ENCODE measurements at regions of chr1 and their contacts with region 1.

Region 1: DNA sequence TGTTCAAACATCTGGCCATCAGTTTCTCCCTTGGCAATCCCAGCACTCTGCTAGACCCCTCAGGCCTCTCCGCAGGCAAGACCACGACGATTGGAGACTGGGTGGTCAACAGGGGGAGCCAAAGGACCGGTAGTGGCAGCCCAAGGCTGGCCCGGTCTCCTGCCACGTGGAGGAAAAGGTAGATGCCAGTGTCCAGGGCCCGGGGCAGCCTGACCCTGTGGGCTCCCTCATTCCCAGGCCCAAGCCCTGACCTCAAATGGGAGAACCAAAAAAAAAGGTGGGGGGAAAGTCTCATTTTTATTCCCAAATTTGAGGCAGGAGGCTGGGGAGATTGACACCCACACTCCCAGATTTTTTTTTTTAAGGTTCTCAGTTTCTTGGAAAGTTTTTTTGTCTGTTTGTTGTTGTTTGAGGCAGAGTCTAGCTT is 24.8 kb downstream of the S100A6 start:
- DNase-seq: peak; percentile 90
- ATAC-seq: peak; percentile 95
- H3K4me3 Mint-ChIP-seq: no peak overlapping the region
- H3K27ac Mint-ChIP-seq: peak overlapping the region; percentile 74
- H3K4me1 Mint-ChIP-seq: peaks cover 10% of the 10 kb centered on the region
- H3K27me3 Mint-ChIP-seq: no peaks in the 10 kb centered on the region

Region 2: GRCh38 chr1:153525088-153525728 is 14.2 kb after region 1 on chr1:
- CTCF ChIA-PET with region 1: interaction called, 16 read pairs
- POLR2A ChIA-PET with region 1: no interaction called
- intact Hi-C with region 1: no loop called
- DNase-seq: no peak
- ATAC-seq: no peak
- H3K4me3 Mint-ChIP-seq: no peak overlapping the region
- H3K27ac Mint-ChIP-seq: no peak overlapping the region
- H3K4me1 Mint-ChIP-seq: peaks cover 2% of the 10 kb centered on the region
- H3K27me3 Mint-ChIP-seq: no peaks in the 10 kb centered on the region

Region 3: DNA sequence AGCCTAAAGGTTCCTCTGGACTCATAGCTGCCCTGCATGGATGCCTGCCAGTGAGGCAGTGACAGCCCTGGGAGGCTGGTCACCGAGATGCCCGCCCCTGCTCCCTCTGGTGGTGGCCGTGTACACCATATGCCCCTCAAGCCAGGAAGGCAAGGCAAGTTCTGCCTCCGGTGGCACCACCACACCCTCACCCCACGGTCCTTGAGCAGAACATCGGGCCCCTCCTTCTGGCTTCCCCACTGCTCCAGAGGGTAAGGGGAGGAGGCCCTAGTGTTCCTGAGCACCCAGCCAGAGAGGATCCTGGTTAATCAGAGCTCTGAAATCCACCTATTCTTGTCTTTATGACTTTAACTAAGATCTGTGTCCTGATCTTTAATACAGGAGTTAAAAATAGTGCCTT is 106.7 kb after region 1 on chr1:
- CTCF ChIA-PET with region 1: interaction called, 57 read pairs
- POLR2A ChIA-PET with region 1: interaction called, 3 read pairs
- intact Hi-C with region 1: loop called (anchors 1 kb)
- DNase-seq: peak; percentile 90
- ATAC-seq: peak; percentile 99
- H3K4me3 Mint-ChIP-seq: no peak overlapping the region
- H3K27ac Mint-ChIP-seq: peak overlapping the region; percentile 58
- H3K4me1 Mint-ChIP-seq: peaks cover 20% of the 10 kb centered on the region
- H3K27me3 Mint-ChIP-seq: no peaks in the 10 kb centered on the region

Region 4: DNA sequence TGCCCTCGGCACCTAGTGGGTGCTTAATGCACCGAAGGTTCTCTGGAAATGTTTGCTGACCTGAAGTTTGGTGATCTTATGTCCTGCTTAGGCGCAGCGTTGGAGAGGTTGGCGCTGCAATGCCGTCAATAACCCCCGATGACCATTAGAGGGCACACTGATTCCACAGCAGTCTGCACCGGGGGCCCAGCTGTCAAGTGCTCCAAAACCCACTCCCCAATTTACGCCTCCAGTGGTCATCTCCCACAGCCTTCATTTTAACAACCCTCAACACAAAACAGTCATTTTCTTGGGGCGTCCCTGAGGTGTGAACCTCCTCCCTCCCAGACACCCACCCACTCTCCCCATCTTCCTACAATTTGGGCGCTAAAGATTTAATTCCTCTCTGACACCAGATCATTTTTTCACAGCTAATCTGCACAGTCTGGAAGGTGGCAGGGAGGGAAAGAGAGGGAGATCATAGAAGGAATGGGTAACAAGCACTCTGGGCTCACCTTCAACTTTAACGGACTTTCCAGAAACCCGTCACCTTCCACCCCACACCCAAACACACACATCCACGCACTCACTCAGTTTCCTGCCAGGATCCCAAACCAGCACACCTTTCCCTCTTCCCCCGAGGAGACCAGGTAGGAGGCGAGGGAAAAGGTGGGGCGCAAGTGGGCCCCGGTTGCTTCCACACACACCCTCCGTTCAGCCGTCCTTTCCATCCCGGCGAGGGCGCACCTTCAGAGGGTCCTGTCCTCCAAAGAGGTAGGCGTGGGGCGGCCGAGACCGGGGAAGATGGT is 166.9 kb after region 1 on chr1:
- CTCF ChIA-PET with region 1: interaction called, 4 read pairs
- POLR2A ChIA-PET with region 1: no interaction called
- intact Hi-C with region 1: loop called (anchors 2 to 5 kb)
- DNase-seq: peak; percentile 74
- ATAC-seq: peak; percentile 66
- H3K4me3 Mint-ChIP-seq: peak overlapping the region; percentile 64
- H3K27ac Mint-ChIP-seq: no peak overlapping the region
- H3K4me1 Mint-ChIP-seq: peaks cover 21% of the 10 kb centered on the region
- H3K27me3 Mint-ChIP-seq: peaks cover 43% of the 10 kb centered on the region

Region 5: DNA sequence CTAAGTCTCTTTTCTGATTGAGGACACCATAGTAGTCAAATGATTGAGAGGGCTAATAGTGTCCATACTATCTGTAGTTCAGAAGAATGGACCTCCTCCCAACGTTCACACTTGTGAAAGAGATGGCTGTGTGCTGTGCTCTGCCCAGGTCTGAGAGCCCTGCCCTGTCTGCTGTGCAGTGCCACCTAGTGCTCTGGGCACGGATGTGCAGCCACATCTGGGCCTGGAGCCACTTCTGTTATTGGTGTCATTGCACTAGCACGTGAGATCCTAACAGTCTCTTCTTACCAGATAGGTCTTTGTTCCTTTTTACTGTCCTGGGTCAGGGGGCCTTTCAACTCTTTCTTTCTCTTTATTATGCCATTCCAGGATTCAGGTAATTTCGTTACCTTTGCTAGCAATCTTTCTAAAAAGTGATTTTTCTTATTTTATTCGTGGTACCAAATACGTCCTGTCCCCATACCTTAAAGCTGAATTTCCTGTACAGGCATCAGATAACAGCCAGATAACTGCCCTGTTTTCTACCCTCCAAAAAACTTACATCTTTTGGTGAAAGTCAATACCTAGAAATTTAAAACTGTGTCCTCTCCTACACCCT is 238.5 kb after region 1 on chr1:
- CTCF ChIA-PET with region 1: interaction called, 4 read pairs
- POLR2A ChIA-PET with region 1: no interaction called
- intact Hi-C with region 1: loop called (anchors 1 kb)
- DNase-seq: peak; percentile 89
- ATAC-seq: peak; percentile 100
- H3K4me3 Mint-ChIP-seq: no peak overlapping the region
- H3K27ac Mint-ChIP-seq: no peak overlapping the region
- H3K4me1 Mint-ChIP-seq: peaks cover 5% of the 10 kb centered on the region
- H3K27me3 Mint-ChIP-seq: no peaks in the 10 kb centered on the region